Activated naive CD4-positive, alpha-beta T cell treated with anti-CD3 and anti-CD28 coated beads for 36 hours (primary cell): ENCODE measurements at regions of chr1 and their contacts with region 1.

Region 1: DNA sequence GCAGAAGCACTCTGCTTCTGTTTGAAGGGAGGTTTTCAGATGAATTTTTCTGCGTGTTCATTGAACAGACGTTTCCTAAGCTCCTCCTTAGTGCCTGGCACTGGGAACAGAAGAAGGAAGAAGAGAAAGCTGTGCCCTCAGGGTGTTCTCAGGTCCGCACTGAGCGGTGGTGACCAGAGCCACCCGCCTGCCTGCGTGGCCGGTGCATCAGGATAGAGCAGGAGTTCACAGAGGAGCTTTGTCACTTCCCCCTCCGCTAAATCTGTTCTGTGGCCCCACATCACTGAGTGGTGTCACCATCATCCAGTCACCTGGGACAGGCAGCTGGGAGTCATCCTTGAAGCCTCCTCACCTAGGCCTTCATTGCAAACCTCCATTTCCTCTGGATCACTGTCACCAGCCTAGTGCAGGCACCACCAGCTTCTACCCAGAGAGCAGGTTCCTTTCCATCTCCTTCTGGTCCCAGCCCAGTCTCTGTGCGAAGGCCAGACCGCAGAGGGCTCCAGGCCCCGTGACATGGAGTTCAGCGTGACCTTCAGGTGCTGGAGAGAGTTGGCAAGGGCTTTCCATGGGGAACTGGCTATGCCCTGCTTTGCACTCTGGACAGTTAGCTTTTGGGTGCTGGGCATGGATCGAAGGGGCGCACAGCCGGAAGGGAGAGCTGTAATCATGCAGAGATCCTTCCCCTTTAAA is 21.7 kb downstream of the PARK7 start:
- DNase-seq: no peak
- H3K4me3 Mint-ChIP-seq: no peak overlapping the region
- H3K27ac Mint-ChIP-seq: no peak overlapping the region
- H3K4me1 Mint-ChIP-seq: peaks cover 5% of the 10 kb centered on the region
- H3K27me3 Mint-ChIP-seq: no peaks in the 10 kb centered on the region

Region 2: DNA sequence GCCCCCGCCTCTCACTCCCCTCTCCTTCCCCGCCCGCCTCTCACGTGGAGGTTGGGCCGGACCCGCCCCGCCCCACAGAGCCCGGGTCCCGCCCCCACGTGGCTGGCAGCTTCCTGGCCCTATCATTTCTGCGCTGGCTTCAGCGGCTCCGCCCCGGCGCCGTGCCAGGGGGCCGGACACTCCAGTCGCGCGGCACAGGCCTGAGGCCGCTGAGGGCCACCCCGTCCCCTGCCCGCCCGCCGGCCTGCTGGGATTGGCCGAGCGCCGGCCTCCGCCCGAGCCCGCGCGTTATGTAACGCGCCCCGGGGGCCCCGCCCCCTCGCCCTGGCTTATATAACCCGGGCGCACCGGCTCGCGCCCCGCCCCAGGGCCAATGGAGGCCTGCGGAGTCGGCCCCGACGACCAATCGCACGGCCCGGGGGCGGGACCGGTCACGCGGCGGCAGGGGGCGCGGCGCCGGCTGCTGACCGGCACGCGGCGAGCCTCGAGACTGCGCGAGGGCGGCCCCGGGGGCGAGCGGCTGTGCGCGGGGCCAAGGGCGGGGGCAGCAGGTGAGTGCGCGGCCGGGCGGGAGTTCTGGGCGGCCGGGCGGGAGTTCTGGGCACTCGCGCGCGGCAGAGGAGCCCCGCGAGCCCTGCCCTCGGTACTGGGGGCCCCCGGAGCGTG is 199.3 kb before region 1 on chr1 and contains the start of gene PER3:
- CTCF ChIA-PET with region 1: no interaction called
- intact Hi-C with region 1: no loop called
- DNase-seq: peak; percentile 85
- H3K4me3 Mint-ChIP-seq: peak within 1 kb of the TSS; percentile 70
- H3K27ac Mint-ChIP-seq: no peak within 1 kb of the TSS
- H3K4me1 Mint-ChIP-seq: peaks cover 22% of the 10 kb centered on the region
- H3K27me3 Mint-ChIP-seq: no peaks in the 10 kb centered on the region
- total RNA-seq, gene PER3: 2.9 to 3.1 TPM

Region 3: GRCh38 chr1:8348777-8349491 is 365.7 kb after region 1 on chr1:
- CTCF ChIA-PET with region 1: interaction called, 3 read pairs
- intact Hi-C with region 1: loop called (anchors 1 kb)
- DNase-seq: peak; percentile 75
- H3K4me3 Mint-ChIP-seq: no peak overlapping the region
- H3K27ac Mint-ChIP-seq: no peak overlapping the region
- H3K4me1 Mint-ChIP-seq: peaks cover 4% of the 10 kb centered on the region
- H3K27me3 Mint-ChIP-seq: no peaks in the 10 kb centered on the region